ENCODE measurements at regions of chr2 and their contacts with region 1.

Region 1: DNA sequence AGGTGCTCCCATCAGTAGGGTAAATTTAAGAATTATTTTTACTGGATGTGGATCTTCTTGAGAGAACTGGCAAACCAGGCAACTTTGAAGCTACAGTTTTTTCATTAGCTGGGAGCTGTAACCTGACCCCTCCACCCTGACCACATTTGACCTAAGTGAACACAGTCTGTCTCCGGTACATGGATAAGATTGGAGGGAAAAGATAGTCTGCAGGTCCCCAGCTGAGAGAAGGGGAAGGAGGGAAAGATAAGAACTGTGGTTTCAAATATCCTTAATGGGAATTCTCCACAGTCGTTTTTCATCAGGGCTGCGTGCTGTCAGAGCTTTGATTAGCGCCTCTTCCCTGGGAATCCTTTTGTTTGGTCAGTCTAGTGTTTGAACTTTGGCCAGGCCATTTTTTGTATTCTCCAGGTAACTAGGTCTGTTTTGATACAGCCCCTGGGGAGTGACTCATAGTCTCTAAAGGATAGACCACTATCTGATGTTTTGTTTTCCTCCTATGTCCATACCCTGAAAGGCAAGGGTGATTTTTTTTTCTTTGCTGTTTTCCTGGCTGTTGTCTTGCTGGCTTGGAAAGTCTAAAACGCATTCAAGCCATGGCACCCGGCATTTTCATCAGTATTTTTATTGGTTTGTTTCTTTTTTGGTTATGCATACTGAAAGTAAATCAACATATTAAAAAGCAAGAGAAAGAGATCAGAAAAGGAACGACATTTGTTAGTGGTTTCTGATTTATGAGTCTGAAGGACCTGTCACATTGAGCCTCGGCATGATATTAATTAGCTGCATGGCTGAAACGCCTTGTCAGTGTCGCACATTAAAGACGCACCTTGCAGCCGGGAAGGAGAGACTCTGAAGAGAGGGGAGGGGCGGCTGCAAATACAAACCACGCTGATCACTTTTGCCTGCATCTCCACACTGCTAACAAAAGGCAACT is 183.4 kb upstream of the FN1 start:
- DNase-seq: no peak

Region 2: GRCh38 chr2:215460682-215461382 is 158.5 kb before region 1 on chr2:
- intact Hi-C with region 1: loop called in 1 of 2 experiments (anchors 10 kb)
- DNase-seq: no peak